IMR-90 (cell line): ENCODE measurements at regions of chrX and their contacts with region 1.

Region 1: GRCh38 chrX:49103637-49104036 is 19.9 kb downstream of the GPKOW start:
- DNase-seq: no peak
- ATAC-seq: no peak
- H3K4me3 ChIP-seq: no peak overlapping the region
- H3K27ac ChIP-seq: no peak overlapping the region
- H3K4me1 ChIP-seq: no peaks in the 10 kb centered on the region
- H3K27me3 ChIP-seq: no peaks in the 10 kb centered on the region
- CTCF ChIP-seq: no peak
- POLR2A ChIP-seq: no peak
- RAD21 ChIP-seq: no peak

Region 2: GRCh38 chrX:49157194-49157593 is 53.6 kb after region 1 on chrX:
- CTCF ChIA-PET with region 1: no interaction called
- POLR2A ChIA-PET with region 1: interaction called, 12 read pairs
- dilution Hi-C with region 1: no loop called
- in situ Hi-C with region 1: no loop called
- intact Hi-C with region 1: no loop called
- DNase-seq: no peak
- ATAC-seq: no peak
- H3K4me3 ChIP-seq: no peak overlapping the region
- H3K27ac ChIP-seq: no peak overlapping the region
- H3K4me1 ChIP-seq: peaks cover 6% of the 10 kb centered on the region
- H3K27me3 ChIP-seq: no peaks in the 10 kb centered on the region; the same call in 1 of the 2 replicates
- CTCF ChIP-seq: no peak
- POLR2A ChIP-seq: no peak
- RAD21 ChIP-seq: no peak

Region 3: GRCh38 chrX:49172280-49172780 is 68.7 kb after region 1 on chrX:
- CTCF ChIA-PET with region 1: no interaction called
- POLR2A ChIA-PET with region 1: no interaction called
- dilution Hi-C with region 1: no loop called
- in situ Hi-C with region 1: no loop called
- intact Hi-C with region 1: no loop called
- DNase-seq: peak; percentile 20
- ATAC-seq: peak; percentile 64
- H3K4me3 ChIP-seq: peak overlapping the region; percentile 61
- H3K27ac ChIP-seq: peak overlapping the region; percentile 45
- H3K4me1 ChIP-seq: peaks cover 6% of the 10 kb centered on the region
- H3K27me3 ChIP-seq: no peaks in the 10 kb centered on the region
- CTCF ChIP-seq: no peak
- POLR2A ChIP-seq: no peak; the same call in 1 of the 2 replicates
- RAD21 ChIP-seq: no peak